ENCODE measurements at regions of chrX and their contacts with region 1.

Region 1: DNA sequence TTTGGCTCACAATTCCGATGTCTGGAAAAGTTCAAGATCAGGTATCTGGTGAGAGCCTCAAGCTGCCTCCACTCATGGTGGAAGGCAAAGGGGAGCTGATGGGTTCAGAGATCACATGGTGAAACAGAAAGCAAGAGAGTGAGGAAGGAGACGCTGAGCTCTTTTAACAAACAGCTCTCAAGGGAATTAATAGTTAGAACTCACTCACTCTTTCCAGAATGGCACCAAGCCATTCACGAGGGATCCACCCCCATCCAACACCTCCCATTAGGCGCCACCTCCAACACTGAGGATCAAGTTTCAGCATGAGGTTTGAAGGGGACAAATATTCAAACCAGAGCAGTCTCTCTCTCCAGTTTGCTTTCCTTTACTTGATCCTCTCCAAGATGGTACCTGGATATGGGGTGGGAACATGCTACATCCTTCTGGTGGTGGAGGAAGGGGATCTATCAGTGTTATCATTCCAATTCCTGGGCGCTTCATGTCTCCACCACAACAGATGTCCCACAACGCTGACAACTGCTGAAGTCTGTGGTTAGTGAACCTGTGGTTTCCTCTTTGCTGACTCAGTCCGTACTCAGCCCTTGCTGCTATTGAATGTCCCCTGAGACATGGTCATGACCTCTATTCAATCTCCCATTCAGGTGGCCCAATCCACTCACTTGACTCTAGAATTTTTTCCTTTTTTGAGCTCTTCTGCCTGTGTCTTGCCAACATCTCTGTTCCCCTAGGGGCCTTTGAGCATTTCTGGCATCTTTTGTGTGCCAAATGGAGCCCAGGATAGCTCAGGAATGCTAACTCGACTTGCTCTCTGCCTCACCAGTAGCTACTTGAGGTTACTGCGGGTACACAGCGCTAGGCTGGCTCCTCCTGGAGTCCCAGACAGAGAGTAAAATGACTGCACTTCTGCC is 395.2 kb downstream of the MID1IP1 start:
- DNase-seq: peak; percentile 82
- ATAC-seq: peak; percentile 89
- H3K4me3 Mint-ChIP-seq: peak overlapping the region; percentile 61
- H3K27ac Mint-ChIP-seq: peak overlapping the region; percentile 83
- H3K4me1 Mint-ChIP-seq: peaks cover 53% of the 10 kb centered on the region
- H3K27me3 Mint-ChIP-seq: no peaks in the 10 kb centered on the region

Region 2: GRCh38 chrX:39162322-39162735 is 34.1 kb before region 1 on chrX:
- CTCF ChIA-PET with region 1: interaction called, 15 read pairs
- DNase-seq: peak; percentile 43
- ATAC-seq: peak; percentile 74
- H3K4me3 Mint-ChIP-seq: peak overlapping the region; percentile 30
- H3K27ac Mint-ChIP-seq: peak overlapping the region; percentile 78
- H3K4me1 Mint-ChIP-seq: peaks cover 53% of the 10 kb centered on the region
- H3K27me3 Mint-ChIP-seq: peaks cover 10% of the 10 kb centered on the region